CD4-positive, alpha-beta T cell (primary cell): ENCODE measurements at regions of chr2 and their contacts with region 1.

Region 1: DNA sequence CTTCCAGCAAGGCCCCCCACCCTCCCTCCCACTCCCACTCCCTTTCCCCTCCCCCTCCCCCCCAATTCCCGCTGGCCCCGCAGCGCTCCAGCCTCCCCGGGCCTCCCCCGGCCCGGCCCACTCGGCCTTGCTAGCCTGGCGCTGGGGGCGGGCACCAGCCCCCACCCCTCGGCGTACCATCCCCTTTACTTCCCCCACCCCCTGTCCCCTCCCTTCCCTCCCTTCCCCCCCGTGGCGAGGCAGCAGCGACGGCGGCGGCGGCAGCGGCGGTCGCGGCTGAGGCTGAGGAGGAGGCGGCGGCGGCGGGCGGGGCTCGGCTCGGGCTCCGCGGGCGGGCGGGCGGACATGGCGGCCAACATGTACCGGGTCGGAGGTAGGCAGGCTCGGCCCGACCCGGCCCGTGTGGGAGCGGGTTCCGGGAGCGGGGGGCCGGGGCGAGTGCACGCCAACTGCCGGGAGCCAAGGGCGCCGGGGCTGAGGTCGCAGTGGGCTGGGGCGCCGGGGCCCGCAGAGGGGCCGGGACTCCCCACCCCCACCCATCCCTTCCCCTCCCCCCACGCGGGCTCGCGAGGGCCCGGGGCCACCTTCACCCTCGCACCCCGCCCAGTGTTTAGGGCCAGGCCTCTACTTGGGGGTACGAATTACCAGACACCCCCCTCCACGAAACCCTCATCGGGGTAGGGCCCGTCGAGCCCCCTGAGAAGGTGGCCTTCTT is at the start of gene MTA3:
- DNase-seq: peak; percentile 41 to 80 (median 67)
- ATAC-seq: peak; percentile 72
- H3K4me3 ChIP-seq: peak within 1 kb of the TSS; percentile 66
- H3K4me3 Mint-ChIP-seq: peak within 1 kb of the TSS; percentile 98
- H3K27ac ChIP-seq: no peak within 1 kb of the TSS
- H3K27ac Mint-ChIP-seq: peak within 1 kb of the TSS; percentile 89
- H3K4me1 ChIP-seq: peaks cover 12% of the 10 kb centered on the region
- H3K4me1 Mint-ChIP-seq: peaks cover 43% of the 10 kb centered on the region
- H3K27me3 ChIP-seq: no peaks in the 10 kb centered on the region
- H3K27me3 Mint-ChIP-seq: no peaks in the 10 kb centered on the region
- CTCF ChIP-seq: no peak
- total RNA-seq, gene MTA3: 27.0 to 30.9 TPM

Region 2: DNA sequence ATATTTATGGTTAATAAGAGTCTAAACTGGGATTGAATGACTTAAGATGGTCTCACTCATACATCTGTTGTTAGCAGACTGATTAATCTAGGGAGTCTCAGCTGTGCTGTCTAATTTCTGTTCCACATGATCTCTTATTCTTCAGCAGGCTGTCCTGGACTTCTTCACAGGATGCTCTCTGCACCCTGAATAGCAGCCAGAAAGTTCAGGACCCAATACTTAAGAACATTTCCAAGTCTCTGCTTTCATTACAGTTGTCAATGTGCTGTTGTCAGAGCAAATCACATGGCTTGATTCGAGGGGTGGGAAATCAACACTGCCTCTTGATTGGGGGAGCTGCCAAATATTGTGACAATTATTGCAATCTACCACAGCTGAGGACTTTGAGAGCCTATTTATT is 1489.5 kb before region 1 on chr2:
- CTCF ChIA-PET with region 1: no interaction called
- POLR2A ChIA-PET with region 1: no interaction called
- intact Hi-C with region 1: no loop called
- DNase-seq: no peak
- ATAC-seq: no peak
- H3K4me3 ChIP-seq: no peak overlapping the region
- H3K4me3 Mint-ChIP-seq: no peak overlapping the region
- H3K27ac ChIP-seq: no peak overlapping the region
- H3K27ac Mint-ChIP-seq: no peak overlapping the region
- H3K4me1 ChIP-seq: no peaks in the 10 kb centered on the region
- H3K4me1 Mint-ChIP-seq: no peaks in the 10 kb centered on the region
- H3K27me3 ChIP-seq: no peaks in the 10 kb centered on the region
- H3K27me3 Mint-ChIP-seq: no peaks in the 10 kb centered on the region
- CTCF ChIP-seq: no peak

Region 3: DNA sequence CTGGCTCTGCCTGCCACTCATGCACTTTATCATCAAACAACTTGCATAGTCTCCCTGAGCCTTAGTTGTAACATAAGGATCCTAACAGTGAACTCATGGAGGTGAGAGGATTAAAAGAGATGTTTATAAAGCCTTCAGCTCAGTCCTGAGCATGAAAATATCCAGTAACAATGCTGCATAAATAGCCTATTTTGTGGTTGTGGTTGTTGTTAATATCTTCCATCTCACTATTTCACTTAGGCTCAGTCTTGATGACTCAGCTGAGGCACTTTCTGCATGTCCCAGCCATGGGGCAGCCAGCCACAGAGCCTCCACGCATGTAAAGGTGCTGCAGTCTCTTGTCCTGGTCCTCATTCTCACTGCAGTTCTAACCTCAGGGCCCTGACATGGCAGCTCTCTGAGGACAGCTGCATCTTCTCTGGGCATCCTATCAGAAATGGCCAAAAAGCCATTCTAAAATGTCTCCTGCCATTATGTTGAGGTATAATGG is 739.5 kb before region 1 on chr2:
- CTCF ChIA-PET with region 1: no interaction called
- POLR2A ChIA-PET with region 1: no interaction called
- intact Hi-C with region 1: no loop called
- DNase-seq: no peak
- ATAC-seq: no peak
- H3K4me3 ChIP-seq: no peak overlapping the region
- H3K4me3 Mint-ChIP-seq: no peak overlapping the region
- H3K27ac ChIP-seq: no peak overlapping the region
- H3K27ac Mint-ChIP-seq: no peak overlapping the region
- H3K4me1 ChIP-seq: no peaks in the 10 kb centered on the region
- H3K4me1 Mint-ChIP-seq: no peaks in the 10 kb centered on the region
- H3K27me3 ChIP-seq: peaks cover 12 to 19% of the 10 kb centered on the region in 2 experiments
- H3K27me3 Mint-ChIP-seq: peaks cover 46% of the 10 kb centered on the region
- CTCF ChIP-seq: no peak

Region 4: DNA sequence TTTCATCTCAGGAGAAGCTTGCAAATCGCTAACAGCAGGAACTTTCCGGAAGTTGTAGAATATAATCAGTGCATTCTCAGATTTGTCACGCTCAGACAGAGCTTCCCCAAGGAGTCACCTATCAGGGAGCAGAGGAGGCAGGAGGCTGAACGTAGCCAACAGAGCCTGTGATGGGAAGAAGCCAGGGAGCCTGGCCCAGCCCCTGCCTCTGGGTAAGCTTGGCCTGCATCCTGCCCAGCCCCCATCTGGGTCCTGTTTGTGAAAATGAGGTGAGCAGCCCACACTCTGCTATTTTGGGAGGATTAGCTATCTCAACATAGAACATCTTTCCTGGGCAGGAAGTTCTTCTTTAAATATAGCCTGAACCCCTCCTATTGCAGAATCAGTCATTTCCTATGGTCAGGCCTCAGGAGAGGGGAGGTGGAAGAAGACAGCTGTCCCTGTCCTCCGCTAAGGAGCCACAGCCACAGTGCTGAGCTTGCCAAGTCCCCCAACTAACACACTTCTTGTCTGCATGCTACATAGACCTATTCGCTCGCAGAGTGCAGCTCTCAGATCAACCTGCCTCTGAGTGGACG is 539.9 kb before region 1 on chr2:
- CTCF ChIA-PET with region 1: no interaction called
- POLR2A ChIA-PET with region 1: no interaction called
- intact Hi-C with region 1: no loop called
- DNase-seq: no peak
- ATAC-seq: no peak
- H3K4me3 ChIP-seq: no peak overlapping the region
- H3K4me3 Mint-ChIP-seq: no peak overlapping the region
- H3K27ac ChIP-seq: no peak overlapping the region
- H3K27ac Mint-ChIP-seq: no peak overlapping the region
- H3K4me1 ChIP-seq: no peaks in the 10 kb centered on the region
- H3K4me1 Mint-ChIP-seq: peaks cover 5% of the 10 kb centered on the region
- H3K27me3 ChIP-seq: peaks cover 1 to 6% of the 10 kb centered on the region in 2 experiments
- H3K27me3 Mint-ChIP-seq: peaks cover 45% of the 10 kb centered on the region
- CTCF ChIP-seq: no peak

Region 5: GRCh38 chr2:42494355-42495233 is 74.0 kb before region 1 on chr2:
- CTCF ChIA-PET with region 1: no interaction called
- POLR2A ChIA-PET with region 1: no interaction called
- intact Hi-C with region 1: loop called (anchors 5 to 10 kb)
- DNase-seq: peak; percentile 52 to 84 (median 68)
- ATAC-seq: peak; percentile 47
- H3K4me3 ChIP-seq: peak overlapping the region; percentile 56
- H3K4me3 Mint-ChIP-seq: peak overlapping the region; percentile 96
- H3K27ac ChIP-seq: no peak overlapping the region
- H3K27ac Mint-ChIP-seq: peak overlapping the region; percentile 68
- H3K4me1 ChIP-seq: peaks cover 17% of the 10 kb centered on the region
- H3K4me1 Mint-ChIP-seq: peaks cover 8% of the 10 kb centered on the region
- H3K27me3 ChIP-seq: peaks cover 0 to 6% of the 10 kb centered on the region in 2 experiments
- H3K27me3 Mint-ChIP-seq: no peaks in the 10 kb centered on the region
- CTCF ChIP-seq: peak; percentile 90

Region 6: DNA sequence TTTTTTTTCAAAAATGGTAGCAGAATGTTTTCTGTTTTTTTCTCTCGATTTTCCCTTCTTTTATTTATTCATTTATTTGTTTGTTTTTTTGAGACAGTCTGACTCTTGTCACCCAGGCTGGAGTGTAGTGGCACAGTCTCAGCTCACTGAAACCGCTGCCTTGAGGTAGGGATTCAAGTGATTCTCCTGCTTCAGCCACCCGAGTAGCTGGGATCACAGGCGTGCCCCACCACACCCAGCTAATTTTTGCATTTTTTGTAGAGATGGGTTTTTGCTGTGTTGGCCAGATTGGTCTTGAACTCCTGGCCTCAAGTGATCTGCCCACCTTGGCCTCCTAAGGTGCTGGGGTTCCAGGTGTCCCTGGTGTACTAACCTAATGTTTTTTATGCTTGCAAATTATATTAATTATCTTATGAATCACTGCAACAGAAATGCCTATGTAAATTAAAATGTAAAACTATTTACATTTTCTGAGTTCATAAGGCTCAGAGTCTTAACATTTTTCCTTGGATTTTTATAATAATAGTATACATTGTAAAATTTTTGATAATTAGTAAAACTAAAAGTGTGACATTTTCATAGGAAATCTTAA is 19.1 kb after region 1 on chr2:
- CTCF ChIA-PET with region 1: no interaction called
- POLR2A ChIA-PET with region 1: no interaction called
- intact Hi-C with region 1: no loop called
- DNase-seq: no peak
- ATAC-seq: no peak
- H3K4me3 ChIP-seq: no peak overlapping the region
- H3K4me3 Mint-ChIP-seq: no peak overlapping the region
- H3K27ac ChIP-seq: no peak overlapping the region
- H3K27ac Mint-ChIP-seq: no peak overlapping the region
- H3K4me1 ChIP-seq: no peaks in the 10 kb centered on the region
- H3K4me1 Mint-ChIP-seq: peaks cover 24% of the 10 kb centered on the region
- H3K27me3 ChIP-seq: no peaks in the 10 kb centered on the region
- H3K27me3 Mint-ChIP-seq: no peaks in the 10 kb centered on the region
- CTCF ChIP-seq: no peak

Region 7: DNA sequence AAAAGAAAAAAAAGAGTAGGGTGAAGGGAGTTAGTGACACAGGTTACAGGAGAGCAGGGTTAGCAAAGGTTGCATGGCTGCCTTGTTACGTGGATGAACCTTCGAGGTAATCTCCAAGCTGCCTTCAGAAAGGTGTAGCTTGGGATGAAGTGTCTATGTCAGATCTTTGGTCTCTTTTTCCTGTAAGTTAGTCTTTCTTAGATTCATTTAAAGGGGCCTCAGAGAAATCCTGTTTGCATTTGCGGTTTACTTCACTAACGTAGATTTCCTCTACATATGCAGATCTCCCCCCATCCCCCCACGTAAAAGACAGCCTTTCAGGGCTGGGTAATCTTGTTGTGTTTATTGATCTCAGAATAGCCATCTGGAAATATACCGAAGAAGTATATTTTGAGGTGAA is 83.5 kb after region 1 on chr2:
- CTCF ChIA-PET with region 1: no interaction called
- POLR2A ChIA-PET with region 1: interaction called, 3 read pairs
- intact Hi-C with region 1: loop called in 1 of 2 experiments (anchors 5 kb)
- DNase-seq: peak in 10 of 14 experiments; percentile 3 to 68 (median 46)
- ATAC-seq: peak; percentile 83
- H3K4me3 ChIP-seq: no peak overlapping the region
- H3K4me3 Mint-ChIP-seq: peak overlapping the region; percentile 80
- H3K27ac ChIP-seq: peak overlapping the region in 1 of 2 donors; percentile 35
- H3K27ac Mint-ChIP-seq: peak overlapping the region; percentile 79
- H3K4me1 ChIP-seq: peaks cover 18% of the 10 kb centered on the region
- H3K4me1 Mint-ChIP-seq: peaks cover 67% of the 10 kb centered on the region
- H3K27me3 ChIP-seq: no peaks in the 10 kb centered on the region
- H3K27me3 Mint-ChIP-seq: no peaks in the 10 kb centered on the region
- CTCF ChIP-seq: no peak